MCF 10A (cell line): ENCODE measurements at regions of chr2 and their contacts with region 1.

Region 1: GRCh38 chr2:152861349-152861942 is 143.0 kb downstream of the ARL6IP6 start:
- DNase-seq: peak; percentile 60
- H3K4me3 Mint-ChIP-seq: no peak overlapping the region
- H3K27ac Mint-ChIP-seq: no peak overlapping the region
- H3K4me1 Mint-ChIP-seq: no peaks in the 10 kb centered on the region
- H3K27me3 Mint-ChIP-seq: no peaks in the 10 kb centered on the region
- CTCF ChIP-seq: peak; percentile 61

Region 2: DNA sequence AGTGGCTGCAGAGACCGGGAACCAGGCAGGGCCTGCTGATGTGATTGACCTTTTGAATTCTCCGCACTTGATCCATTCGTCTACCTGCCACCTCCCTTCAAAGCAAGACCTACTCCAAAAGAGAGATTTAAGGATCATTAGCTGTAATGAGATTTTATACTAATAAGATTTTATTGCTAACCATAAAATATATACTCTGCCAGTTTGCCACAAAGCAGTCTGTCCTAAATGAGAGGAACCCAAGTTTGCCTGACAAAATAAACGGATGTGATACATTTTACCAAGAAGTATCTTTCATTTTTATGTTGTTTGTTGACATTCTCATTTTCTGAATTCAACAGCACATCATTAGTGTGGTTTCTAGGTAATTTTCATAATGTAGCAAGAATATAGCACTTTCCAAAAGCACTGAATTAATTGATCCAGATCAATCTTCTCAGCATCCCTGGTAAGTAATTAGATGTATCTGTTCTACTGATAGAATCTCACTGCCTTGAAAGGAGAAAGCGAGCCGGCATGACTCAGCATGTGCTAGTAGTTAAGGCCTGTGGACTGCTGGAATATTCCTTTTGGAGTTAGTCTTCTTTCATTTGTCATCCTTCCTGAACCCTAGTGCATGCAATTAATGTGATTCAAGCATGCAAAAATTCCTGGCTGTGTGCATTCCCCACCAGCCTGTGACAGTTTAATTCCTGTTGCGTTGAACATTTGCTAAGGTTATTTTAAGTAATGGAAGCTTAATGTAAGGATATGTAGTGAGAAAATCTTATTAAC is 14.6 kb before region 1 on chr2:
- CTCF ChIA-PET with region 1: interaction called, 30 read pairs
- POLR2A ChIA-PET with region 1: no interaction called
- intact Hi-C with region 1: no loop called
- DNase-seq: no peak
- H3K4me3 Mint-ChIP-seq: no peak overlapping the region
- H3K27ac Mint-ChIP-seq: no peak overlapping the region
- H3K4me1 Mint-ChIP-seq: no peaks in the 10 kb centered on the region
- H3K27me3 Mint-ChIP-seq: no peaks in the 10 kb centered on the region
- CTCF ChIP-seq: no peak

Region 3: GRCh38 chr2:152875701-152876695 is 14.6 kb after region 1 on chr2:
- CTCF ChIA-PET with region 1: interaction called, 50 read pairs
- POLR2A ChIA-PET with region 1: no interaction called
- intact Hi-C with region 1: no loop called
- DNase-seq: peak; percentile 62
- H3K4me3 Mint-ChIP-seq: no peak overlapping the region
- H3K27ac Mint-ChIP-seq: peak overlapping the region; percentile 69
- H3K4me1 Mint-ChIP-seq: peaks cover 19% of the 10 kb centered on the region
- H3K27me3 Mint-ChIP-seq: no peaks in the 10 kb centered on the region
- CTCF ChIP-seq: no peak

Region 4: DNA sequence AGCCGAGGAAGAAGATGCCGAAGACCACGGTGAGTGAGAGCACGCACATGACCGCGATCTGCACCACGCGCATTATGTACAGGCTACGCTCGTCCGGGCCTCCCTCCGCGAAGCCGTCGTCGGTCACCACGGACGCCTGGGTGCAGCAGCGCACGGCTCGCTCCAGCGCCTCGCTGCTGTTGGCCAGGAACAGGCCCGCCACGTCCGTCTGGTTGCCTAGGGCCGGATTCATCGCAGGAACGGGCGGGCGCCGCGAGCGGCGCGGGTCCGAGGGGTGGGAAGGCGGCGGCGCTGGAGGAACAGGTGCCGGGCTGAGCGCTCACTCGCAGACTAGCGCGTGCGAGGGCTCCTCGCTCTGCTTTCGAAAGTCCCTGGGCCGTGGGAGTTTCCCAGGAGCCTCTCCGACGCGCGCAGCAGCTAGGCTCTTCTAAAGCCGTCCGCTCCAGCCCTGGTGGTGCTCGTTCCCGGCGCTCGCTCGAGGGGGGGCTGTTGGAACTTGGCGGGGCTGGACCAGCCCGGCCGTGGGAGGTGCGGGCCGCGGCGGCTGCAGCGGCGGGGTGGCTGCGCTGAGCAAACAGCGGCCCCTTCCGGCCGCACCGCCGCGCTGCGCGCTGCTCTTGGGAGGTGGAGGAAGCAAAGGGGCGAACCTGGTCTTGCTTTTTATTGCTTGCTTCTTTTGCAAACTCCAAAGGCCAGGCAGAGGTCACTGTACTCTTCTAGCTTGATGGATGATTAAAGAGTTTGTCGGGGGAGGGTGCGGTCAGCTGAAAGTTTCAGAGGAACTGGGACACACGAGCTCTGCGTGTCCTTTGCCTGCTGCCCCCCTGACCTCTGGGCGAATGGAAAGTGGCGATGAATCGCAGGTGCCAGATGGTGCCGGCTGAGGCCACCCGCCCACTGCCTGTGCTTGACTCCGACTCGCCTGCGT is 617.2 kb after region 1 on chr2 and contains the start of gene RPRM:
- CTCF ChIA-PET with region 1: interaction called, 19 read pairs
- POLR2A ChIA-PET with region 1: no interaction called
- intact Hi-C with region 1: loop called (anchors 1 kb)
- DNase-seq: peak; percentile 52
- H3K4me3 Mint-ChIP-seq: peak within 1 kb of the TSS; percentile 55
- H3K27ac Mint-ChIP-seq: no peak within 1 kb of the TSS
- H3K4me1 Mint-ChIP-seq: peaks cover 7% of the 10 kb centered on the region
- H3K27me3 Mint-ChIP-seq: peaks cover 48% of the 10 kb centered on the region
- CTCF ChIP-seq: peak; percentile 97
- total RNA-seq, gene RPRM: not detected in 2 replicates

Region 5: GRCh38 chr2:153519257-153519875 is 657.9 kb after region 1 on chr2:
- CTCF ChIA-PET with region 1: interaction called, 11 read pairs
- POLR2A ChIA-PET with region 1: no interaction called
- intact Hi-C with region 1: no loop called
- DNase-seq: peak; percentile 70
- H3K4me3 Mint-ChIP-seq: no peak overlapping the region
- H3K27ac Mint-ChIP-seq: no peak overlapping the region
- H3K4me1 Mint-ChIP-seq: no peaks in the 10 kb centered on the region
- H3K27me3 Mint-ChIP-seq: peaks cover 33% of the 10 kb centered on the region
- CTCF ChIP-seq: peak; percentile 73